SK-N-SH (cell line): ENCODE measurements at regions of chr1 and their contacts with region 1.

Region 1: GRCh38 chr1:153494976-153495535 is 34.6 kb upstream of the S100A7 start:
- DNase-seq: peak; percentile 79
- H3K4me3 ChIP-seq: no peak overlapping the region; a peak in 1 of 4 replicates
- H3K27ac ChIP-seq: no peak overlapping the region
- H3K4me1 ChIP-seq: peaks cover 0 to 5% of the 10 kb centered on the region in 2 experiments; a peak in 1 of 4 replicates
- H3K27me3 ChIP-seq: peaks cover 10% of the 10 kb centered on the region; the same call in 1 of the 2 replicates
- CTCF ChIP-seq: peak; percentile 96
- EP300 ChIP-seq: no peak
- RAD21 ChIP-seq: peak; percentile 88

Region 2: DNA sequence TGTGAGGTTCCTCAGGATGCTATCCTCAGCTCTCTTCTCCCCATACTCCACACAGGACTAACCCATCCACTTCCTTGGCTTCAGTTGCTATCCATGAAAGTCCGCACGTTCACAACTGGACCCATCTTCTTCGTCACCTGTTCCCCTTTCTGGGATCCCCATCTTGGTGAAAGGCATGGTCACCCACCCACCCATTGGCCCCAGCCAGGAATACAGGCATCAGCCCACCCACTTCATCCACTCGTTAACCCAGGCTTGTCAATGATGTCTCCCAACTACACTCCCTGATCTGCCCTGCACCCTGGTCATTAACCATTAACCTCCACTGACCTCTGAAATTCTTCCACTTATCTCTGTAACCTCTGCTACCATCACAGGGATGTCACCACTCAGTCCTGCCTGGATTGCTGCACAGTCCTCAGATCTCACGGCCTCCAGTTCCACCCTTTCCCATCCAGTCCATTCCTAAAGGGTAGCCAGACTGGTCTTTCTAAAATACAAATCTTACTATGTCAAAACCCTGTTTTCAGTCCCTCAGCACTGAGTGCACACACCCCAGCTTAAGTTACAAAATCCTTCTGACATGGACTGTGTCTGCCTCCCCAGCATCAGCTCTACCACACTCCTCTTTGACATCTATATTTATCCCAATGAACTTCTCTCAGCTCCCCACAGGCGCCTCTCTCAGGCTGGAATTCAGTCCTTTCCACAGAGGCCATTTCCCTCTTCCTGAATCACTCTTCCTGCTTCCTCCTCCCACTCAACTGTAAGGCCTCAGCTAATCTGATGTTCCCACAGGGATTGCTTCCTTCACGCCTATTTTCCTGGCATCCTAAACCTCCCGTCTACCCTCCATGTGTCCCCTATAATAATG is 156.8 kb before region 1 on chr1:
- CTCF ChIA-PET with region 1: interaction called, 14 read pairs
- POLR2A ChIA-PET with region 1: no interaction called
- DNase-seq: no peak
- H3K4me3 ChIP-seq: no peak overlapping the region
- H3K27ac ChIP-seq: no peak overlapping the region
- H3K4me1 ChIP-seq: no peaks in the 10 kb centered on the region
- H3K27me3 ChIP-seq: peaks cover 10% of the 10 kb centered on the region; the same call in 1 of the 2 replicates
- CTCF ChIP-seq: no peak
- EP300 ChIP-seq: no peak
- RAD21 ChIP-seq: no peak

Region 3: GRCh38 chr1:153400244-153400643 is 94.8 kb before region 1 on chr1:
- CTCF ChIA-PET with region 1: interaction called, 11 read pairs
- POLR2A ChIA-PET with region 1: no interaction called
- DNase-seq: no peak
- H3K4me3 ChIP-seq: no peak overlapping the region
- H3K27ac ChIP-seq: no peak overlapping the region
- H3K4me1 ChIP-seq: no peaks in the 10 kb centered on the region
- H3K27me3 ChIP-seq: peaks cover 48% of the 10 kb centered on the region; the same call in 1 of the 2 replicates
- CTCF ChIP-seq: peak; percentile 25
- EP300 ChIP-seq: no peak
- RAD21 ChIP-seq: peak; percentile 20; the same call in 1 of the 2 replicates

Region 4: GRCh38 chr1:153456396-153456795 is 38.7 kb before region 1 on chr1:
- CTCF ChIA-PET with region 1: interaction called, 12 read pairs
- POLR2A ChIA-PET with region 1: no interaction called
- DNase-seq: no peak
- H3K4me3 ChIP-seq: no peak overlapping the region
- H3K27ac ChIP-seq: no peak overlapping the region
- H3K4me1 ChIP-seq: no peaks in the 10 kb centered on the region; a peak in 1 of 4 replicates
- H3K27me3 ChIP-seq: peaks cover 25% of the 10 kb centered on the region; the same call in 1 of the 2 replicates
- CTCF ChIP-seq: no peak
- EP300 ChIP-seq: no peak
- RAD21 ChIP-seq: no peak

Region 5: GRCh38 chr1:153478692-153479618 is 16.1 kb before region 1 on chr1:
- CTCF ChIA-PET with region 1: interaction called, 60 read pairs
- POLR2A ChIA-PET with region 1: no interaction called
- DNase-seq: no peak
- H3K4me3 ChIP-seq: no peak overlapping the region
- H3K27ac ChIP-seq: no peak overlapping the region
- H3K4me1 ChIP-seq: peaks cover 0 to 12% of the 10 kb centered on the region in 2 experiments; a peak in 1 of 4 replicates
- H3K27me3 ChIP-seq: peaks cover 4% of the 10 kb centered on the region; the same call in 1 of the 2 replicates
- CTCF ChIP-seq: no peak
- EP300 ChIP-seq: no peak
- RAD21 ChIP-seq: no peak